ENCODE measurements at regions of chr5 and their contacts with region 1.

Region 1: DNA sequence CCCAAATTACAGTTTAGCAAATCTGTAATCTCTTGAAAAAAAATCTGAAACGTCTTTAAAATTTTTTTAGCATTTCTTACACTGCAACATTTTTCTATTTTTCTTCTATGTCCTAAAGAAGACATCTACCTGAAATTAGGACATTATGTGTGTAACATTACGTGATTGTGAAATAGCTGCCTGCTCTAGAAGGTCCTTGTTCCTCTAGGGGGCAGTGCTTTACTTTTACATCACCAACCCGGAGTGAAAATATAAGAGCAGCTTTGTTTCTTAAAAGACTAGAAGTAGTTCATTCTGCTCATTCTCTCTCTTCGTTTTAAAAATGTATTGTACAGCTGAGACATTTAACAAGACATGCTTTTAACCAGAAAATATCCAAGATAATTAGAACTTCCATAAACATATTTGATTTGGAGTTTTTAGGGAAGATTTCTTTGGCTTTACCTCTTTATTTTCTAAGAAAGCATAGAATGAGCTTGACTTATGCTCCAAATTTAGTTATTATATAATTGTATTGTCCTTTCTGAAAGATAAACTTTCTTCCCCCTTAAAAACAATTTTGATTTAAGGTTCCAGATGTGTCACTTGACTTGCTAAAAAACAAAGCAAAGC is 48.1 kb upstream of the RIOK2 start:
- DNase-seq: peak in 3 of 9 experiments; percentile 13 to 62 (median 53)
- ATAC-seq: no peak
- H3K4me3 ChIP-seq: no peak overlapping the region
- H3K4me3 Mint-ChIP-seq: no peak overlapping the region
- H3K27ac ChIP-seq: no peak overlapping the region
- H3K27ac Mint-ChIP-seq: no peak overlapping the region
- H3K4me1 ChIP-seq: no peaks in the 10 kb centered on the region
- H3K4me1 Mint-ChIP-seq: no peaks in the 10 kb centered on the region
- H3K27me3 ChIP-seq: no peaks in the 10 kb centered on the region
- H3K27me3 Mint-ChIP-seq: peaks cover 2% of the 10 kb centered on the region
- CTCF ChIP-seq: peak; percentile 85

Region 2: GRCh38 chr5:96344678-96345577 is 886.2 kb before region 1 on chr5:
- CTCF ChIA-PET with region 1: no interaction called
- POLR2A ChIA-PET with region 1: no interaction called
- intact Hi-C with region 1: no loop called
- DNase-seq: peak in 3 of 9 experiments; percentile 8 to 75 (median 70)
- ATAC-seq: peak; percentile 89
- H3K4me3 ChIP-seq: no peak overlapping the region
- H3K4me3 Mint-ChIP-seq: peak overlapping the region; percentile 2
- H3K27ac ChIP-seq: no peak overlapping the region
- H3K27ac Mint-ChIP-seq: no peak overlapping the region
- H3K4me1 ChIP-seq: peaks cover 12% of the 10 kb centered on the region
- H3K4me1 Mint-ChIP-seq: peaks cover 13% of the 10 kb centered on the region
- H3K27me3 ChIP-seq: peaks cover 0 to 2% of the 10 kb centered on the region in 2 experiments
- H3K27me3 Mint-ChIP-seq: peaks cover 4% of the 10 kb centered on the region
- CTCF ChIP-seq: peak; percentile 26

Region 3: GRCh38 chr5:97534166-97534565 is 303.0 kb after region 1 on chr5:
- CTCF ChIA-PET with region 1: no interaction called
- POLR2A ChIA-PET with region 1: no interaction called
- intact Hi-C with region 1: loop called in 1 of 2 experiments (anchors 5 kb)
- DNase-seq: peak in 2 of 9 experiments; percentile 5 to 18
- ATAC-seq: no peak
- H3K4me3 ChIP-seq: no peak overlapping the region
- H3K4me3 Mint-ChIP-seq: no peak overlapping the region
- H3K27ac ChIP-seq: no peak overlapping the region
- H3K27ac Mint-ChIP-seq: no peak overlapping the region
- H3K4me1 ChIP-seq: no peaks in the 10 kb centered on the region
- H3K4me1 Mint-ChIP-seq: no peaks in the 10 kb centered on the region
- H3K27me3 ChIP-seq: no peaks in the 10 kb centered on the region
- H3K27me3 Mint-ChIP-seq: no peaks in the 10 kb centered on the region
- CTCF ChIP-seq: no peak